Activated B cell treated with CpG ODN at 0.5 μM for 24 hours (primary cell): ENCODE measurements at regions of chr13 and their contacts with region 1.

Region 1: GRCh38 chr13:101545521-101545920 is 93.0 kb downstream of the ITGBL1 start:
- DNase-seq: no peak
- ATAC-seq: no peak
- H3K4me3 Mint-ChIP-seq: no peak overlapping the region
- H3K27ac Mint-ChIP-seq: no peak overlapping the region
- H3K4me1 Mint-ChIP-seq: no peaks in the 10 kb centered on the region
- H3K27me3 Mint-ChIP-seq: peaks cover 2% of the 10 kb centered on the region
- CTCF ChIP-seq: no peak

Region 2: DNA sequence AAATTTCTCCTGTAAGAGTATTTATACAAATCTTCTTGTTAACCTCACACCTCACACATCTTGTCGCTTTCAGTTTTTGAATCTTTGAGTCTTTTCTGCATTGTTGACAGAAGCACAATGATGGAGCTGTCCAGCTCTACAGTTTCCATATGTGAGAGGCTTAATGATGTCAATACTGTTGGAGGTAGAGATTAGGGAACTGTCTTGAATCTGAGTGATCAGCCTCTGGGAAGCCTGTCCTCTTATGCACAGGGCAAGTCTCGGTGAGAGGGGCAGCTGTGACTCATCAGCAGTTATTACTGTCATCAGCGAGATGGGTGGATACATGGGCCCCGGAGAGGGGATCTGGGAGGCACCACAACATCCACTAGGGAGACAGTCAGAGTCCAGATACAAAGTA is 97.7 kb before region 1 on chr13:
- CTCF ChIA-PET with region 1: no interaction called
- POLR2A ChIA-PET with region 1: no interaction called
- intact Hi-C with region 1: loop called (anchors 5 kb)
- DNase-seq: no peak
- ATAC-seq: no peak
- H3K4me3 Mint-ChIP-seq: no peak overlapping the region
- H3K27ac Mint-ChIP-seq: no peak overlapping the region
- H3K4me1 Mint-ChIP-seq: no peaks in the 10 kb centered on the region
- H3K27me3 Mint-ChIP-seq: no peaks in the 10 kb centered on the region
- CTCF ChIP-seq: no peak

Region 3: GRCh38 chr13:101775267-101775666 is 229.7 kb after region 1 on chr13:
- CTCF ChIA-PET with region 1: no interaction called
- POLR2A ChIA-PET with region 1: no interaction called
- intact Hi-C with region 1: no loop called
- DNase-seq: no peak
- ATAC-seq: no peak
- H3K4me3 Mint-ChIP-seq: no peak overlapping the region
- H3K27ac Mint-ChIP-seq: no peak overlapping the region
- H3K4me1 Mint-ChIP-seq: no peaks in the 10 kb centered on the region
- H3K27me3 Mint-ChIP-seq: no peaks in the 10 kb centered on the region
- CTCF ChIP-seq: no peak

Region 4: DNA sequence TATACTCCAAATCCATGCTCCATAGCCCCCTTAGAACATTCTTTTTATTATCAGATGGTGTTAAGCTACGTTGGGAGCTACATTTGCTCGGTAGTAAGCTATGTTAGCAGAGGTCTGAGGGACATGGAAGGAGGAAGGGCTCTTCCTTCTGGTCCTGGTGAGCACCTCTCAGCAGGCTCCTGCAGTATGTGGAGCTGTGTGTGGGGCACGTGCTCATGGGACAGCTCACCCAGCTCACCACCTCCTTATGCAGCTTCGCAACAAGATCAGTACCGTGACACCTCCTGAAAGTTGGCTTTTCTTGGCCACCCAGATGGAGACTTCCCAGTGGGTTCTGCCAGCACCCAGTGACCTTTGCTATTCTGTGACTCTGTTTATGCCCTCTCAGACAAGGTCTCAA is 1921.2 kb after region 1 on chr13:
- CTCF ChIA-PET with region 1: no interaction called
- POLR2A ChIA-PET with region 1: no interaction called
- intact Hi-C with region 1: no loop called
- DNase-seq: no peak
- ATAC-seq: no peak
- H3K4me3 Mint-ChIP-seq: no peak overlapping the region
- H3K27ac Mint-ChIP-seq: no peak overlapping the region
- H3K4me1 Mint-ChIP-seq: no peaks in the 10 kb centered on the region
- H3K27me3 Mint-ChIP-seq: no peaks in the 10 kb centered on the region
- CTCF ChIP-seq: no peak